K562 (cell line): ENCODE measurements at regions of chr15 and their contacts with region 1.

Region 1: DNA sequence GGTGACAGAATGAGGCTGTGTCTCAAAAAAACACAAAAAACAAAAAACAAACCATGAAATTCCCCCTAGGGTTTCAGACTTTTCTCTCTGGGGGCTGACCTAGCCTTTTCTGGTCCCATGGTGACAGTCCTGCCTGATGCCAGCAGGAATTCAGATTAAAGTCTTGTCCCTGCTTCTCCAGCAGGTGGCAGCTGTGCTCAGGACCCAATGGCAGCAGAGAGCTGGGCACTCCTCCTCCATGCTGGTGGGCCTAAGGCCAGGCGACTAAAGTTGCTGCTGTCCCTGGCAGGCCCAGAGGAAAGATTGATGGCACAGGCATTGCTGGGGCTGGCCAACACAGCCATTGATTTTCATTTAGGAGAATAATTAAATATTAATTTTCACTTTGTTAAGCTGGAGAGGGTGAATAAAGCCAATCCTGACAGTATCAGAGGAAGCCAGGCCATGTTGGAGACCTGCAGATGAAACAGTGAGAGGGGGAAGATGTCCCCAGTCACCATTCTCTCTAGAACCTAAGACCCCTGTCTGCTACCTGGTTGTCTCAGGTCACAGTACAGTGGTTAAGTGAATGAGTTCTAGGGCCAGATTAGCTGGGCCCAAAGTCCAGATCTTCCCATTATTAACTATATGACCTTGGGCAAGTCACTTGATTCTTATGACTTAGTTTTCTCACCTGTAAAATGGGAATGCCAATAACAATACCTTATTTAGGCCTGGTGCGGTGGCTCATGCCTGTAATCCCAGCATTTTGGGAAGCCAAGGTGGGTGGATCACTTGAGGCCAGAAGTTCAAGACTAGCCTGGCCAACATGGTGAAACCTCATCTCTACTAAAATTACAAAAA is 7.1 kb downstream of the CELF6 start:
- DNase-seq: peak; percentile 72 to 78 (median 74)
- ATAC-seq: peak; percentile 99
- H3K4me3 ChIP-seq: no peak overlapping the region
- H3K27ac ChIP-seq: no peak overlapping the region
- H3K4me1 ChIP-seq: no peaks in the 10 kb centered on the region
- H3K27me3 ChIP-seq: peaks cover 4 to 14% of the 10 kb centered on the region in 2 experiments; a peak in 4 of 5 replicates
- CTCF ChIP-seq: peak; percentile 79 to 83 (median 80)
- EP300 ChIP-seq: no peak
- POLR2A ChIP-seq: no peak
- RAD21 ChIP-seq: peak; percentile 61 to 84

Region 2: GRCh38 chr15:72473614-72474465 is 161.0 kb after region 1 on chr15 and contains the start of gene ARIH1:
- CTCF ChIA-PET with region 1: no interaction called
- POLR2A ChIA-PET with region 1: no interaction called
- in situ Hi-C with region 1: no loop called
- intact Hi-C with region 1: loop called (anchors 2 kb)
- DNase-seq: peak; percentile 89 to 97 (median 90)
- ATAC-seq: peak; percentile 91
- H3K4me3 ChIP-seq: peak within 1 kb of the TSS; percentile 76
- H3K27ac ChIP-seq: peak within 1 kb of the TSS; percentile 96
- H3K4me1 ChIP-seq: peaks cover 7 to 15% of the 10 kb centered on the region in 2 experiments; a peak in 4 of 5 replicates
- H3K27me3 ChIP-seq: no peaks in the 10 kb centered on the region
- CTCF ChIP-seq: peak; percentile 45 to 74 (median 63)
- EP300 ChIP-seq: no peak
- POLR2A ChIP-seq: peak; percentile 97
- RAD21 ChIP-seq: peak in 1 of 2 experiments; percentile 39; a peak in 1 of 4 replicates
- polyA plus RNA-seq, gene ARIH1: 17.7 to 18.0 TPM

Region 3: DNA sequence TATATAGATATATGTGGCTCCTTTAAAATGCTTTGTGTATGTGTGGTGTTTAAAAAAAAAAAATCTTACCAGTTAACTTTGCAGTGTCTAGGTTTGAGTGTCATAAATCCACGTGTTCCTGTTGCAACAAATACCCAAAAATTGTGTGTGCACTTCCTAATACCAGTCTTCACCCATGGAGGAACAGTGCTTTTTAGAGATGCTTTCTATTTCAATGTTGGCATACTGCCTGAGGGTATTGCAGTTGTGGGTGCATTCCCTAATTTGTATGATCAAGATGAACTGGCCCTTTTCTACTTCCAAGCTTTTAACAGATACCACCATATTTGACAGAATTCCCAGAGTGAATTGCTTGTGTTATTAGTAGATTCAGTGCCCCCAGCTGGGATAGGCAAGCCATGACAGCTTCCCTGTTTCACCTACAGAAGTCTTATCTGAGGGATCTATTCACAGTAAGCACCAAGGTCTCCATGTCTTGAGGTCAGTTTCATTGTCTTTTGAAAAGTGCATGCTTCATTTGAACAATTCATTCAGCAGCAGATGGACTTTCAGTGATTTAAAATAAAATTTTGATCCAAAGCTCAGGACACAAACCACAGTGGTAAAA is 272.8 kb after region 1 on chr15:
- CTCF ChIA-PET with region 1: no interaction called
- POLR2A ChIA-PET with region 1: no interaction called
- in situ Hi-C with region 1: no loop called
- intact Hi-C with region 1: loop called (anchors 10 kb)
- DNase-seq: no peak
- ATAC-seq: peak; percentile 52; the same call in 1 of the 3 replicates
- H3K4me3 ChIP-seq: no peak overlapping the region
- H3K27ac ChIP-seq: no peak overlapping the region
- H3K4me1 ChIP-seq: no peaks in the 10 kb centered on the region
- H3K27me3 ChIP-seq: no peaks in the 10 kb centered on the region
- CTCF ChIP-seq: peak; percentile 4 to 33 (median 27); a peak in 2 of 6 replicates
- EP300 ChIP-seq: no peak
- POLR2A ChIP-seq: no peak
- RAD21 ChIP-seq: peak; percentile 28 to 32

Region 4: GRCh38 chr15:73081321-73081958 is 768.6 kb after region 1 on chr15:
- CTCF ChIA-PET with region 1: no interaction called
- POLR2A ChIA-PET with region 1: no interaction called
- in situ Hi-C with region 1: loop called (anchors 25 kb)
- intact Hi-C with region 1: no loop called
- DNase-seq: peak; percentile 8 to 51 (median 10)
- ATAC-seq: peak; percentile 46; the same call in 1 of the 3 replicates
- H3K4me3 ChIP-seq: no peak overlapping the region
- H3K27ac ChIP-seq: no peak overlapping the region
- H3K4me1 ChIP-seq: no peaks in the 10 kb centered on the region
- H3K27me3 ChIP-seq: no peaks in the 10 kb centered on the region
- CTCF ChIP-seq: peak; percentile 40 to 71 (median 52); a peak in 4 of 6 replicates
- EP300 ChIP-seq: no peak
- POLR2A ChIP-seq: no peak
- RAD21 ChIP-seq: peak; percentile 62 to 78

Region 5: DNA sequence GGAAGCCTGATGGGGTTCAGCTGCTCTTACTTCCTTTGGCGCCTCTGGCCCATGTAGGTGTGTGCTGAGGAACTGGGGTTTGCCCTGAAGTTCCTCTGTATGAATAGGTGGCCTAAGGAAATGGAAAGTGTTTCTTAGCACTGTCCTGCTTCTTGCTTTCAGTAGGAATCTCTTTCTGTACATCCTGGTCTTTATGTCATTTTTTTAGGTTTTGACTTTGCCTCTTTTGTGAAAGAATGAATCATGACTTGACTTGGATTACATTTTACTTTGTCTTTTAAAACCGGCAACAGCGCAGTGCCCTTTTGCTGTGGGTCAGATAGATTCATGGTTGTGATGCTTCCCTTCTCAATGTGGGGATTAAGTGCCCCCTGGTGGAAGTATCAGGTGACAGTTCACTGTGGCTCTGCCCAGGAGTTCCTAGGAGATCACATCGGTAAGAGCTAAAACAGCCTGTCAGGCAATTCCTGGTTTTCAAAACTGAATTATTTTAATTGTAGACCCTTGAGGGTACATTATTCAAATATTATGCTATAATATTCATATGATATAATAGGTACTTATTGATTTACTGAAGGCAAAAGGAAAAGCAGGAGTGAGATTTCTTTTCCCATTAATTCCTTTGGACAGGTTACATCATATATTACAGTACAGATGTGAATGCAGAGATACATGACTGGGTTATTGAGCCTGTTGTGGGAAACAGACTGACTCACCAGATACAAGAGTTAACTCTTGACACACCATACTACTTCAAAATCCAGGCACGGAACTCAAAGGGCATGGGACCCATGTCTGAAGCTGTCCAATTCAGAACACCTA is 960.6 kb after region 1 on chr15:
- CTCF ChIA-PET with region 1: no interaction called
- POLR2A ChIA-PET with region 1: no interaction called
- in situ Hi-C with region 1: loop called (anchors 25 kb)
- intact Hi-C with region 1: no loop called
- DNase-seq: peak; percentile 54 to 59 (median 59)
- ATAC-seq: peak; percentile 92
- H3K4me3 ChIP-seq: no peak overlapping the region
- H3K27ac ChIP-seq: no peak overlapping the region
- H3K4me1 ChIP-seq: no peaks in the 10 kb centered on the region
- H3K27me3 ChIP-seq: peaks cover under 1 to 2% of the 10 kb centered on the region in 2 experiments; a peak in 1 of 5 replicates
- CTCF ChIP-seq: peak; percentile 67 to 73 (median 70)
- EP300 ChIP-seq: no peak
- POLR2A ChIP-seq: no peak
- RAD21 ChIP-seq: peak; percentile 60 to 80